Ovary (tissue), 10 donors: ENCODE measurements at regions of chr6 and their contacts with region 1.

Region 1: DNA sequence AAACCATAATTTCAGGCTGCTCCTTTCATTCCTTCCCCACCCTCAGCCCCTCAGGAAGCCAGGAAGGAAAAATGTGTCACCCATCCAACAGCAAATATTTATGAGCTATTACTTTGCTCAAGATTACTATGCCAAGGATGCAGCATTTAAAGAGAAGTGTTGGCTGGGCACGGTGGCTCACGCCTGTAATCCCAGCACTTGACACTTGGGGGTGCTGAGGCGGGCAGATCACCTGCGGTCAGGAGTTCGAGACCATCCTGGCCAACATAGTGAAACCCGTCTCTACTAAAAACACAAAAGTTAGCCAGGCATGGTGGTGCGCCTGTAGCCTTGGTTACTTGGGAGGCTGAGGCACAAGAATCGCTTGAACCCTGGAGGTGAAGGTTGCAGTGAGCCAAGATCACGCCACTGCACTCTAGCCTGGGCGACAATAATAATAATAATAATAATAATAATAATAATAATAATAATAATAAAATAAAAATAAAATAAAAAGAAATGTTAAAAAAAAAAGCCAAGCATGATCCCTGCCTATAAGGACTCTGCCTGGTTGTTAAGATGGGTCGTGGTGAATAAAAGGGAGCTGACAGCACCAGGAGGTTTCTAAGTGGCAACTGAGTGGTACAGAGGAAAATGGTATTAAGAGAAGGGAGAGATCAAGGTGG is 20.5 kb upstream of the TIAM2 start:
- DNase-seq: no peak
- H3K4me3 ChIP-seq: no peak overlapping the region
- H3K27ac ChIP-seq: no peak overlapping the region
- H3K4me1 ChIP-seq: no peaks in the 10 kb centered on the region
- H3K27me3 ChIP-seq: no peaks in the 10 kb centered on the region
- CTCF ChIP-seq: no peak
- EP300 ChIP-seq: no peak
- POLR2A ChIP-seq: no peak

Region 2: DNA sequence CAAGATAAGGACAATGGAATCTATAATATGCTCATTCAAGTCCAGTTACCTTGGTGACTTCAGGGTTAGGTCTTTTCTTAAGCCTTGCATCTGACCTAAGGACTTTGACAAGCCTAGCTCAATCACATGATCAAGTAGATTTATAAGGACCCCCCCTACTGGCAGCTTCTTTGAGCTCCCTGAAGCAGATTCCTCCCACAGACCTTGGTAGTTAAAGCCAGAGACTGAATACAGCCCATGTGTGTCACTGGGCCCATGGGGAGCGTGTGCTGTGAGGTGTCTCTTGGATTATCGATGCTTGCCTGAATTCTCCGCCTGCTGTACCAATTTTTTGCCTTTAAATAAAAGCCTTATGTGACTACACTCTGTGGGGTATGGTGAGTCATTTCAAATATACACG is 1470.8 kb before region 1 on chr6:
- intact Hi-C with region 1: no loop called
- DNase-seq: no peak
- H3K4me3 ChIP-seq: no peak overlapping the region
- H3K27ac ChIP-seq: no peak overlapping the region
- H3K4me1 ChIP-seq: no peaks in the 10 kb centered on the region
- H3K27me3 ChIP-seq: no peaks in the 10 kb centered on the region
- CTCF ChIP-seq: no peak
- EP300 ChIP-seq: no peak
- POLR2A ChIP-seq: no peak

Region 3: GRCh38 chr6:154951345-154952200 is 23.0 kb before region 1 on chr6:
- intact Hi-C with region 1: loop called in 1 of 4 experiments (anchors 2 kb)
- DNase-seq: no peak
- H3K4me3 ChIP-seq: no peak overlapping the region
- H3K27ac ChIP-seq: no peak overlapping the region
- H3K4me1 ChIP-seq: no peaks in the 10 kb centered on the region
- H3K27me3 ChIP-seq: no peaks in the 10 kb centered on the region
- CTCF ChIP-seq: no peak
- EP300 ChIP-seq: no peak
- POLR2A ChIP-seq: no peak